PC-3 (cell line): ENCODE measurements at regions of chr7 and their contacts with region 1.

Region 1: GRCh38 chr7:22601812-22602565 is 102.0 kb upstream of the STEAP1B start:
- DNase-seq: peak; percentile 48
- ATAC-seq: peak; percentile 35
- H3K4me3 ChIP-seq: no peak overlapping the region
- H3K27ac ChIP-seq: no peak overlapping the region
- H3K4me1 ChIP-seq: peaks cover 20% of the 10 kb centered on the region
- H3K27me3 ChIP-seq: no peaks in the 10 kb centered on the region
- CTCF ChIP-seq: no peak

Region 2: GRCh38 chr7:22640269-22640668 is 38.3 kb after region 1 on chr7:
- CTCF ChIA-PET with region 1: no interaction called
- POLR2A ChIA-PET with region 1: no interaction called
- intact Hi-C with region 1: loop called (anchors 5 kb)
- DNase-seq: no peak
- ATAC-seq: no peak
- H3K4me3 ChIP-seq: no peak overlapping the region
- H3K27ac ChIP-seq: no peak overlapping the region
- H3K4me1 ChIP-seq: no peaks in the 10 kb centered on the region
- H3K27me3 ChIP-seq: no peaks in the 10 kb centered on the region
- CTCF ChIP-seq: no peak